ENCODE measurements at regions of chr2 and their contacts with region 1.

Region 1: DNA sequence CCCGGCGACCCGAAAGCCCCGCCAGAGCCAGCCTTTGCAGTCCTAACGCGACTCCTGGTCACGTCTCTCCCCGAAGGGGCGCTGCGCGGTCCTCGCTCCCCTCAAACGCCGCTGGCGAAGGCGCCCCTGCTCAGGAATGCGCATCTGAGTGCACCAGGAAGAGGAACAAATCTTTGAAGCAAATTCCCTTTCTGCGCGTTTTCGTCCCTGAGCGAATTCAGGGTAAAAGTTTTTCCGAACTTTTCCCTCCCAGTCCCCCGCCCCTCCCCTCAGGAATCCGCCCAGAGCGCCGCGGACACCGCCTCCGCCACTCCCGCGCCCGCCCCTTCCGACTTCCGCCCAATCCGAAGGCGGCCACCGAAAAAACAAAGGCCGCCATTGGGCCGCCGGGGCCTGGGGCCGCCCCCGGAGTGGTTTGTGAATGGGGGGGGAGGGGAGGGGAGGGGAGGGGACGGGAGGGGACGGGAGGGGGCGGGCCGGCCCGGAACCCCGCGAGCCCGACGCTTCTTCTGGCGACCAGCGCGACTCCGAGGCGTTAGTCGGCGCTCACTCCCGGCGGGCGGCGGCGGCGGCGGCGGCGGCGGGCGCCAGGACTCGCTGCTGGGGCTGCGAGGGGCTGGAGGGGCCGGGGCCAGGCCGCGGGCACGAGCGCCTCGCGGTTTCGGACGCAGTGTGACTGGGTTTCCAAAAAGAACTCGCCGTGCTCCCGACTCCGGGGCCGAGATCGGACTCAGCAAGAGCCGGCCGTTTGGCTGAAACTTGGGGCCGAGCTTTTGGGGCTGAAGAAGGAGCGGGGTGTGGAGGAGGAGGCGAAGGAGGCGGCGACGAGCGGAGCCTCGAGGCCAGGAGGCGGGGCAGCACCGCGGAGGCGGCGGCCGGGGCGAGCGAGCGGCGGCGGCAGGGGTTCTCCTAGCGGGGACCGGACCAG is at the start of gene FZD7:
- DNase-seq: peak; percentile 70 to 87 (median 81)
- ATAC-seq: peak; percentile 92
- H3K4me3 ChIP-seq: peak within 1 kb of the TSS; percentile 91
- H3K4me3 Mint-ChIP-seq: peak within 1 kb of the TSS in 9 of 10 donors; percentile 87 to 96 (median 92)
- H3K27ac ChIP-seq: peak within 1 kb of the TSS; percentile 44
- H3K27ac Mint-ChIP-seq: peak within 1 kb of the TSS in 8 of 9 donors; percentile 46 to 83 (median 72)
- H3K4me1 ChIP-seq: peaks cover 9 to 11% of the 10 kb centered on the region in 2 donors
- H3K4me1 Mint-ChIP-seq: peaks cover 6 to 17% (median 14%) of the 10 kb centered on the region in 7 donors
- H3K27me3 ChIP-seq: peaks cover 6 to 22% of the 10 kb centered on the region in 2 donors
- H3K27me3 Mint-ChIP-seq: peaks cover 0 to 45% (median 7%) of the 10 kb centered on the region in 5 donors
- total RNA-seq, gene FZD7: 0.27 to 0.99 (median 0.43) TPM

Region 2: DNA sequence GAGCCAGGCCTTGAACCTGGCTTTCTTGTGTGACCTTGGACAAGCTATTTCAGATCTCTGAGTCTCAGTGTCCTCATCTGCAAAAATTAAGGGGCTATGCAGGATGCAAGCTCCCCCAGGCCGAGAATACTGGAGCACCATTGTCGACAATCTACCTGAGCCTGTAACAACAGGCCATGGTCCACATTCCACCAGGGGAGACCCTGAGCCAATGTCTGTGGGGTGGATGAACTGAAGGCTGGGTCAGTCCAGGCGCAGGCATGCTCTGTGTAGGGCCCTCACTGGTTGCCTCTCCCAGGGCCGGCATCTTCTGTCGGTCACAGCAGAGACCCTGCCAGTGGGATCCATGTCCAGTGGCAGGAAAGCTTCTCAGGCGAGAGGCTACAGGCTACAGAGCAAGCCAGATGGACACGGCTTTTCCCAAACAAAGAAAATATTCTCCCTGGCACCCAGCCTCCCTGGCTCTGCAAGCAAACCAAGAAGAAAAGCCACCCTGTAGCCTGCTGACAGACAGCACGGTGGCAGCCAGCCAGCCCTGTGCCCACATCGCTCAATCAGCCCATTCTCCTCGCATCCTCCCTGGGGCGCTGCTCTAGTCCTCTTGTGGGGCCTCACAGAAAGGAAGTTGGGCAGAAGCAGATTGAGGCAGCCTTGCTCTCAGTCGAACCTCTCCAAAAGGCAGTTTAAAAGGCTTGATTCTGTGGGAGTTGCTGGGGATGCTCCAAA is 48.6 kb before region 1 on chr2:
- CTCF ChIA-PET with region 1: no interaction called
- POLR2A ChIA-PET with region 1: no interaction called
- intact Hi-C with region 1: no loop called
- DNase-seq: peak in 3 of 9 donors; percentile 7 to 25 (median 18)
- ATAC-seq: peak; percentile 56
- H3K4me3 ChIP-seq: no peak overlapping the region
- H3K4me3 Mint-ChIP-seq: peak overlapping the region in 1 of 10 donors; percentile 17
- H3K27ac ChIP-seq: no peak overlapping the region
- H3K27ac Mint-ChIP-seq: no peak overlapping the region
- H3K4me1 ChIP-seq: no peaks in the 10 kb centered on the region
- H3K4me1 Mint-ChIP-seq: peaks cover 0 to 13% (median 0%) of the 10 kb centered on the region in 7 donors
- H3K27me3 ChIP-seq: no peaks in the 10 kb centered on the region
- H3K27me3 Mint-ChIP-seq: peaks cover 0 to 4% (median 0%) of the 10 kb centered on the region in 5 donors

Region 3: DNA sequence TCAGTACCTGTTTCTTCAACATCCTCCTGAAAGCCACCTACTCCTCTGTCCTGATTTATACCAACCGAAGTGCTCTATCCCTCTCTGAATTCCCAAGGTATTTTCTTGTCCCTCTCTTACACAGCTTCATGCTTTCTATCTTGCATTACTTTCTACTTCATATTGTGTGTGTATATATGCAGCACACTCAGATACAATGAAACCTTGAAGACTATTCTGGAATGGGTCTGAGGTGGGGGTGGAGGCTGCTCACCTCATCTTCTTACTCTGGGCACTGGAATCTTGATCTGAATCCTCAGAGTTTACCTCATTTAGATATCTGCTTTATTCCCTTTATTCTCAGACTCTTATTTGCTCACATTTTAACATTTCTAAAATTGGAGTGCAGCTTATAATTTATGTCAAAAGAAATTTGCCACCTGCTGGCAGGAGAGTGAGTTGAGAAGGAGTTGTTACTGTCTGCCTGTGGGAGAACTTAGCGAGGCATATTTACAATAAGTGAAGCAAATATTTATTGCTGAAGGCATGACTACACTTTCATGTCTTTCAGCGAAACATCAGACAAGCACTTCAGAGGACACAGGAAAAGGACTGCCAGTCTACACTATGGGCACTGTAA is 22.9 kb after region 1 on chr2:
- CTCF ChIA-PET with region 1: no interaction called
- POLR2A ChIA-PET with region 1: no interaction called
- intact Hi-C with region 1: loop called in 1 of 2 experiments (anchors 2 kb)
- DNase-seq: peak in 3 of 9 donors; percentile 8 to 11 (median 9)
- ATAC-seq: no peak
- H3K4me3 ChIP-seq: no peak overlapping the region
- H3K4me3 Mint-ChIP-seq: no peak overlapping the region
- H3K27ac ChIP-seq: no peak overlapping the region
- H3K27ac Mint-ChIP-seq: no peak overlapping the region
- H3K4me1 ChIP-seq: no peaks in the 10 kb centered on the region
- H3K4me1 Mint-ChIP-seq: no peaks in the 10 kb centered on the region
- H3K27me3 ChIP-seq: no peaks in the 10 kb centered on the region
- H3K27me3 Mint-ChIP-seq: peaks cover 35 to 47% (median 41%) of the 10 kb centered on the region in 5 donors

Region 4: GRCh38 chr2:202238234-202239197 is 204.9 kb after region 1 on chr2 and contains the start of gene SUMO1:
- CTCF ChIA-PET with region 1: no interaction called
- POLR2A ChIA-PET with region 1: no interaction called
- intact Hi-C with region 1: loop called in 1 of 2 experiments (anchors 2 kb)
- DNase-seq: peak; percentile 80 to 95 (median 93)
- ATAC-seq: peak; percentile 98
- H3K4me3 ChIP-seq: peak within 1 kb of the TSS; percentile 82
- H3K4me3 Mint-ChIP-seq: peak within 1 kb of the TSS; percentile 91 to 100 (median 97)
- H3K27ac ChIP-seq: peak within 1 kb of the TSS; percentile 88
- H3K27ac Mint-ChIP-seq: peak within 1 kb of the TSS; percentile 96 to 99 (median 97)
- H3K4me1 ChIP-seq: peaks cover 11% of the 10 kb centered on the region in 2 donors
- H3K4me1 Mint-ChIP-seq: peaks cover 10 to 51% (median 35%) of the 10 kb centered on the region in 7 donors
- H3K27me3 ChIP-seq: no peaks in the 10 kb centered on the region
- H3K27me3 Mint-ChIP-seq: peaks cover 0 to 2% (median 0%) of the 10 kb centered on the region in 5 donors
- total RNA-seq, gene SUMO1: 48.1 to 104 (median 56.8) TPM

Region 5: DNA sequence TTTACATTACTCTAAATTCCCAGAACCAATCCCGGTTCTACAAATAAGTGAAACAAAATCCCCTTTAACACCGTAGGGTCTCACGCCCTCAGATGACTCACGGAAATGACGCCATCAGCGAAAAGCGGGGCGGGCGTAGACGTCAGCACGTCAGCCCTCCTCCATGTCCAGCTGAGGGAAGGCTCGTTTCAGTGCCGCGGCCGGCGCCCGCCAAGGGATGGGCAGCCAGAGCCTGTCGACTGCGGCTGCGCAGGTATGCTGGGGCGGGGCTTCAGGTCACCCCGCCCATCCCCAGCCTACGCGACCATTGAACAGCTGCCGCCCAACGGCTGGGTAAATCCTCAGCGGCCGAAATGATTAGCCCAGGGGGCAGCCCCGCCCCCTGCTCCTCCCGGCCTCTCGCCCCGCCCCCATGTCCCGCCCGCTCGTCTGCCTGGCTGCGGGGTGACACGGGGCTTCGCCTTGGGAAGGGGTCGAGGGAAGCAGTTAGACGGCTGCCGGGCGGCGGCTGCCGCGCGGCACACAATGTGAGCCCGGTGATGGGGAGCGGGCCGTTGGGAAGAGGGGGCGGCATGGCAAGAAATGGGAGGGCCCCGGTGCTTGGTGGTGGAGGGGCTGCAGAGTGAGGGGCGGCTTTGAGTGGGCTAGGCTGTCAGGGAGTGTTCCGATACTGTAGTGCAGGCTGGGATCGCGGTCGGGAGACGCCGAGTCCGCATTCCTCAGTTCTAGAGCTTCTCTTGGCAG is 981.0 kb after region 1 on chr2 and contains the start of gene NBEAL1:
- CTCF ChIA-PET with region 1: no interaction called
- POLR2A ChIA-PET with region 1: no interaction called
- intact Hi-C with region 1: loop called (anchors 2 to 10 kb)
- DNase-seq: peak; percentile 88 to 99 (median 90)
- ATAC-seq: peak; percentile 95
- H3K4me3 ChIP-seq: peak within 1 kb of the TSS; percentile 92
- H3K4me3 Mint-ChIP-seq: peak within 1 kb of the TSS; percentile 90 to 97 (median 95)
- H3K27ac ChIP-seq: peak within 1 kb of the TSS; percentile 92
- H3K27ac Mint-ChIP-seq: peak within 1 kb of the TSS; percentile 84 to 98 (median 94)
- H3K4me1 ChIP-seq: peaks cover 5 to 14% of the 10 kb centered on the region in 2 donors
- H3K4me1 Mint-ChIP-seq: peaks cover 18 to 48% (median 41%) of the 10 kb centered on the region in 7 donors
- H3K27me3 ChIP-seq: no peaks in the 10 kb centered on the region
- H3K27me3 Mint-ChIP-seq: peaks cover 0 to 19% (median 0%) of the 10 kb centered on the region in 5 donors
- total RNA-seq, gene NBEAL1: 11.6 to 15.9 (median 12.6) TPM

Measured in naive thymus-derived CD4-positive, alpha-beta T cell (primary cell).